ENCODE measurements at regions of chr17 and their contacts with region 1.

Region 1: GRCh38 chr17:74961657-74962490 is 10.7 kb downstream of the HID1 start:
- DNase-seq: peak; percentile 62 to 93 (median 85)
- ATAC-seq: peak; percentile 75
- H3K4me3 ChIP-seq: no peak overlapping the region
- H3K4me3 Mint-ChIP-seq: no peak overlapping the region
- H3K27ac ChIP-seq: no peak overlapping the region
- H3K27ac Mint-ChIP-seq: no peak overlapping the region
- H3K4me1 ChIP-seq: no peaks in the 10 kb centered on the region
- H3K4me1 Mint-ChIP-seq: peaks cover 9% of the 10 kb centered on the region
- H3K27me3 ChIP-seq: no peaks in the 10 kb centered on the region
- H3K27me3 Mint-ChIP-seq: no peaks in the 10 kb centered on the region
- CTCF ChIP-seq: peak; percentile 86

Region 2: DNA sequence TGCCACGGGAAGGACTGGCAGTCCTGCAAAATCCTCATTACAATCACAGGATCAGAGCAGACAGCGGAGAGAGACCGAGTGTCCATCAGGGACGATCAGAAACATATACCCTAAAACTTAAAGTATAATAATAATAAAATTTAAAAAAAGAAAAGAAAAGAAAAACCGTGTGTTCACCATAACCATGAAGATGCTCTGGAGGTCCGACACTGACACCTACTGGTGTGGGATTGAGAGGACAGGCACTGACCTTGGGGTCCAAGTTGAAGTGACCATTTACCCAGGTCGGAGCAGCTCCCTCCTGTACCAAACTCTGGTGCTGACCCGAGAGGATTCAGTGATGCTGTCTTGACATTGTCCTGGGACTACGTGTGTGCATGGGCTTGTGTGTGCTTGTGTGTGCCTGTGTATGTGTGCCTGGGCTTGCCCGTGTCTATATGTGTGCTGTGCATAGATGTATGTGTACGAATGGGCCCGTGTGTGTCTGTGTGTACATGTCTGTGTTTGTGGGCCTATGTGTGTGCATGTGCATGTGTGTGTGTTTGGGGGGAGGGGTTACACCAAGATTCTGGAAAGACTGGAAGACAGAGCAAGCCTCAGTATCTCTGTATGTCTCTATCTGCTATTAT is 359.8 kb before region 1 on chr17:
- CTCF ChIA-PET with region 1: no interaction called
- POLR2A ChIA-PET with region 1: no interaction called
- intact Hi-C with region 1: no loop called
- DNase-seq: peak in 5 of 9 experiments; percentile 7 to 54 (median 24)
- ATAC-seq: no peak
- H3K4me3 ChIP-seq: no peak overlapping the region
- H3K4me3 Mint-ChIP-seq: no peak overlapping the region
- H3K27ac ChIP-seq: no peak overlapping the region
- H3K27ac Mint-ChIP-seq: no peak overlapping the region
- H3K4me1 ChIP-seq: peaks cover 32% of the 10 kb centered on the region
- H3K4me1 Mint-ChIP-seq: peaks cover 11% of the 10 kb centered on the region
- H3K27me3 ChIP-seq: peaks cover 0 to 2% of the 10 kb centered on the region in 2 experiments
- H3K27me3 Mint-ChIP-seq: peaks cover 39% of the 10 kb centered on the region
- CTCF ChIP-seq: peak; percentile 40

Region 3: GRCh38 chr17:74748529-74749365 is 213.1 kb before region 1 on chr17 and contains the start of gene NHERF1:
- CTCF ChIA-PET with region 1: interaction called, 3 read pairs
- POLR2A ChIA-PET with region 1: no interaction called
- intact Hi-C with region 1: loop called in 1 of 2 experiments (anchors 5 kb)
- DNase-seq: peak; percentile 83 to 98 (median 92)
- ATAC-seq: peak; percentile 83
- H3K4me3 ChIP-seq: peak within 1 kb of the TSS; percentile 94 to 98
- H3K4me3 Mint-ChIP-seq: peak within 1 kb of the TSS; percentile 98
- H3K27ac ChIP-seq: peak within 1 kb of the TSS; percentile 60 to 80
- H3K27ac Mint-ChIP-seq: peak within 1 kb of the TSS; percentile 96
- H3K4me1 ChIP-seq: peaks cover 61% of the 10 kb centered on the region
- H3K4me1 Mint-ChIP-seq: peaks cover 67% of the 10 kb centered on the region
- H3K27me3 ChIP-seq: no peaks in the 10 kb centered on the region
- H3K27me3 Mint-ChIP-seq: no peaks in the 10 kb centered on the region
- CTCF ChIP-seq: no peak
- total RNA-seq, gene NHERF1: 72.5 to 73.7 TPM

Region 4: GRCh38 chr17:74950207-74950606 is 11.7 kb before region 1 on chr17:
- CTCF ChIA-PET with region 1: interaction called, 32 read pairs
- POLR2A ChIA-PET with region 1: no interaction called
- intact Hi-C with region 1: no loop called
- DNase-seq: no peak
- ATAC-seq: no peak
- H3K4me3 ChIP-seq: no peak overlapping the region
- H3K4me3 Mint-ChIP-seq: no peak overlapping the region
- H3K27ac ChIP-seq: no peak overlapping the region
- H3K27ac Mint-ChIP-seq: no peak overlapping the region
- H3K4me1 ChIP-seq: no peaks in the 10 kb centered on the region
- H3K4me1 Mint-ChIP-seq: no peaks in the 10 kb centered on the region
- H3K27me3 ChIP-seq: no peaks in the 10 kb centered on the region
- H3K27me3 Mint-ChIP-seq: peaks cover 3% of the 10 kb centered on the region
- CTCF ChIP-seq: no peak

Region 5: DNA sequence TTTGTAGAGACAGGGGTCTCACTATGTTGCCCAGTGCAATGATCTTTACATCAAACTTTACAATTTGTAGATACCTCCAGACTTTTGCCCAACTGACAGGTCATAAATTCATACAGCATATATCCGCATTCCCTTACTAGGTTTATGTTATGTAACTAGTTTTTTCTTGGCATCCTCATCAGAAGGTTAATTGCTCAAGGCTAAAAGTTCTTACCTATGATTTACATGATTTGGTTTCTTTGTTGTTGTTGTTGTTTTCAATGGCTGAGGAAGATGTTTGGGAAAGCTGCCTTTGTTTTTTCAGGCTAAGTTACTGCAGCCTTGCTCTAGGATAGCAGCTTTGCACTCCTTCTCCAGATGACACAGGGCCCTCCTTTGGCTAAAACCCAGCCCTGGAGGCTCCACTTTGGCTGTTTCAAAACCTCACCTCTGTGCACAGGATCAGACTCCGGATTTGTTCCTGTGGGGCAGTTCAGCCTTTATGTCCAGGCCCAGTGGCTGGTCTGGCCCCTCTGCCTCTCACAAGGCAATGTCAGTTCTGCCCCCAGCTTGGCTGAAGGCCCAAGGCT is 31.7 kb after region 1 on chr17:
- CTCF ChIA-PET with region 1: interaction called, 15 read pairs
- POLR2A ChIA-PET with region 1: no interaction called
- intact Hi-C with region 1: no loop called
- DNase-seq: no peak
- ATAC-seq: no peak
- H3K4me3 ChIP-seq: no peak overlapping the region
- H3K4me3 Mint-ChIP-seq: no peak overlapping the region
- H3K27ac ChIP-seq: no peak overlapping the region
- H3K27ac Mint-ChIP-seq: no peak overlapping the region
- H3K4me1 ChIP-seq: no peaks in the 10 kb centered on the region
- H3K4me1 Mint-ChIP-seq: peaks cover 3% of the 10 kb centered on the region
- H3K27me3 ChIP-seq: no peaks in the 10 kb centered on the region
- H3K27me3 Mint-ChIP-seq: no peaks in the 10 kb centered on the region
- CTCF ChIP-seq: no peak

Region 6: DNA sequence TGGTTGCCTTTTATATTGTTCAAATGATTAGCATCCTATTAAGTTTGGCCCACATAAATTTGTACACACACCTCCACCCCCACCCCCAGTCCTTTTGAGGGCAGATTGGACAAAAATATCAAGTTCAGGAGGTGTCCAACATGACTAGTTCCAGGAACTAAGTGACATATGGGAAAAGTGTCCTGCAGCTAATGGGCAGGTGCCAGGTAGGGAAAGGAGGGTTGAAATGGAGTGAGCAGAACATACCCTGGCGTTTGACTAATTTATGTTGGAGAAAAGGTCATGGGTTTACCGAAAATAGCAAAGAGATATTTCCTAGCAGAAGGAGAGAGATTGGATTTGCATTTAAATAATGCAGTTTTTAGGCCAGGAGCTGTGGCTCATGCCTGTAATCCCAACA is 90.1 kb after region 1 on chr17:
- CTCF ChIA-PET with region 1: interaction called, 4 read pairs
- POLR2A ChIA-PET with region 1: no interaction called
- intact Hi-C with region 1: loop called in 1 of 2 experiments (anchors 5 kb)
- DNase-seq: no peak
- ATAC-seq: no peak
- H3K4me3 ChIP-seq: no peak overlapping the region
- H3K4me3 Mint-ChIP-seq: no peak overlapping the region
- H3K27ac ChIP-seq: no peak overlapping the region
- H3K27ac Mint-ChIP-seq: no peak overlapping the region
- H3K4me1 ChIP-seq: peaks cover 12% of the 10 kb centered on the region
- H3K4me1 Mint-ChIP-seq: peaks cover 40% of the 10 kb centered on the region
- H3K27me3 ChIP-seq: no peaks in the 10 kb centered on the region
- H3K27me3 Mint-ChIP-seq: no peaks in the 10 kb centered on the region
- CTCF ChIP-seq: no peak

Region 7: GRCh38 chr17:75199886-75200618 is 238.2 kb after region 1 on chr17:
- CTCF ChIA-PET with region 1: interaction called, 45 read pairs
- POLR2A ChIA-PET with region 1: interaction called, 3 read pairs
- intact Hi-C with region 1: loop called (anchors 1 kb)
- DNase-seq: no peak
- ATAC-seq: no peak
- H3K4me3 ChIP-seq: no peak overlapping the region
- H3K4me3 Mint-ChIP-seq: no peak overlapping the region
- H3K27ac ChIP-seq: no peak overlapping the region
- H3K27ac Mint-ChIP-seq: no peak overlapping the region
- H3K4me1 ChIP-seq: peaks cover 7% of the 10 kb centered on the region
- H3K4me1 Mint-ChIP-seq: peaks cover 4% of the 10 kb centered on the region
- H3K27me3 ChIP-seq: no peaks in the 10 kb centered on the region
- H3K27me3 Mint-ChIP-seq: no peaks in the 10 kb centered on the region
- CTCF ChIP-seq: no peak

Measured in CD8-positive, alpha-beta T cell (primary cell).